ENCODE measurements at regions of chr2 and their contacts with region 1.

Region 1: GRCh38 chr2:25738383-25739343 is 65.3 kb upstream of the DTNB start:
- DNase-seq: no peak
- ATAC-seq: no peak
- H3K4me3 ChIP-seq: no peak overlapping the region
- H3K27ac ChIP-seq: no peak overlapping the region
- H3K4me1 ChIP-seq: no peaks in the 10 kb centered on the region
- H3K27me3 ChIP-seq: no peaks in the 10 kb centered on the region
- CTCF ChIP-seq: no peak
- EP300 ChIP-seq: no peak
- POLR2A ChIP-seq: no peak
- RAD21 ChIP-seq: no peak

Region 2: GRCh38 chr2:25618642-25619037 is 120.0 kb before region 1 on chr2:
- CTCF ChIA-PET with region 1: no interaction called
- POLR2A ChIA-PET with region 1: no interaction called
- in situ Hi-C with region 1: no loop called
- intact Hi-C with region 1: no loop called
- DNase-seq: no peak
- ATAC-seq: no peak
- H3K4me3 ChIP-seq: no peak overlapping the region
- H3K27ac ChIP-seq: no peak overlapping the region
- H3K4me1 ChIP-seq: no peaks in the 10 kb centered on the region
- H3K27me3 ChIP-seq: peaks cover 17 to 21% of the 10 kb centered on the region in 2 experiments; a peak in 4 of 5 replicates
- CTCF ChIP-seq: no peak
- EP300 ChIP-seq: no peak
- POLR2A ChIP-seq: no peak
- RAD21 ChIP-seq: no peak

Region 3: GRCh38 chr2:25936889-25937545 is 198.4 kb after region 1 on chr2:
- CTCF ChIA-PET with region 1: no interaction called
- POLR2A ChIA-PET with region 1: no interaction called
- in situ Hi-C with region 1: no loop called
- intact Hi-C with region 1: loop called (anchors 10 kb)
- DNase-seq: no peak
- ATAC-seq: no peak
- H3K4me3 ChIP-seq: no peak overlapping the region
- H3K27ac ChIP-seq: no peak overlapping the region
- H3K4me1 ChIP-seq: no peaks in the 10 kb centered on the region
- H3K27me3 ChIP-seq: no peaks in the 10 kb centered on the region
- CTCF ChIP-seq: no peak
- EP300 ChIP-seq: no peak
- POLR2A ChIP-seq: no peak
- RAD21 ChIP-seq: no peak

Measured in K562 (cell line).